Endothelial cell of umbilical vein (primary cell): ENCODE measurements at regions of chr13 and their contacts with region 1.

Region 1: GRCh38 chr13:39862900-39863299 is 207.4 kb downstream of the COG6 start:
- DNase-seq: peak; percentile 83
- H3K4me3 ChIP-seq: no peak overlapping the region
- H3K27ac ChIP-seq: peak overlapping the region; percentile 76
- H3K4me1 ChIP-seq: peaks cover 37% of the 10 kb centered on the region
- H3K27me3 ChIP-seq: no peaks in the 10 kb centered on the region
- CTCF ChIP-seq: no peak
- POLR2A ChIP-seq: no peak

Region 2: GRCh38 chr13:39876258-39876657 is 13.4 kb after region 1 on chr13:
- CTCF ChIA-PET with region 1: interaction called, 10 read pairs
- POLR2A ChIA-PET with region 1: no interaction called
- dilution Hi-C with region 1: no loop called
- intact Hi-C with region 1: loop called (anchors 1 kb)
- DNase-seq: peak; percentile 90
- H3K4me3 ChIP-seq: no peak overlapping the region
- H3K27ac ChIP-seq: peak overlapping the region; percentile 98
- H3K4me1 ChIP-seq: peaks cover 67% of the 10 kb centered on the region
- H3K27me3 ChIP-seq: no peaks in the 10 kb centered on the region
- CTCF ChIP-seq: no peak
- POLR2A ChIP-seq: peak; percentile 25